ENCODE measurements at regions of chr11 and their contacts with region 1.

Region 1: DNA sequence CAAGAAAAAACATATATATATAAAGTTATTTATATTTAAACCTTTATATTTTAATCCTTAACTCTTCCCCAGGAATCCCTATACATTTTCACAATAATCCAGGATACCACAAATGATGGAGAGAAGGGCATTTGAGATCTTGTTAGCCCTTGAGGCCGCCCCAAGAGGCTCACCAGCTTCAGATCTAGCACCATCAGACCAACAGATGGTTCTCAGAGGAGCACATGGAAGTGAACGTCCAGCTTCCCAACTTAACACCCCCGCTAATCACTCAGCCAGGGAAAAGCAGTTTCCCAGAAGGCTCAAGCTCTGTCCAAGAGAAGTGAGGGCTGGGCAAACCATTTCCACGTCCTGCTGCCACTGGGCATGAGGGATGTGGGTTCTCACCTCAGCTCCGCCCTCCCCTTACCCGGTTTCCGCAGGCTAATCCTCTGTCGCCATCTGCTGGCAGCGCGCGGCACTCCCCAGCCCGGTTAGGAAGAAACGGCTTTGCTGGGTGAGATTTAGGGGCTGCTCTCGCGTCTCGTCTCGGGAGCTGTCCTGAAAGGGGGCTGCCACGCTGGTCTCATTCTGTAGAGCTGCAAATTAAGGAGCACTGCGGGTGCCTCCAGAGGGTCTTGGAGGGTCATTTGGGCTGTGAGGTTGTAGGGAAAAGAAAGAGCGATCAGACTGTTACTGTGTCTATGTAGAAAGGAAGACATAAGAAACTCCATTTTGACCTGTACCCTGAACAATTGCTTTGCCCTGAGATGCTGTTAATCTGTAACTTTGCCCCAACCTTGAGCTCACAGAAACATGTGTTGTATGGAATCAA is 6.8 kb upstream of the FAM111A start:
- DNase-seq: peak; percentile 93
- ATAC-seq: peak; percentile 100
- H3K4me3 Mint-ChIP-seq: no peak overlapping the region
- H3K27ac Mint-ChIP-seq: no peak overlapping the region
- H3K4me1 Mint-ChIP-seq: peaks cover 8% of the 10 kb centered on the region
- H3K27me3 Mint-ChIP-seq: no peaks in the 10 kb centered on the region
- CTCF ChIP-seq: peak; percentile 93

Region 2: DNA sequence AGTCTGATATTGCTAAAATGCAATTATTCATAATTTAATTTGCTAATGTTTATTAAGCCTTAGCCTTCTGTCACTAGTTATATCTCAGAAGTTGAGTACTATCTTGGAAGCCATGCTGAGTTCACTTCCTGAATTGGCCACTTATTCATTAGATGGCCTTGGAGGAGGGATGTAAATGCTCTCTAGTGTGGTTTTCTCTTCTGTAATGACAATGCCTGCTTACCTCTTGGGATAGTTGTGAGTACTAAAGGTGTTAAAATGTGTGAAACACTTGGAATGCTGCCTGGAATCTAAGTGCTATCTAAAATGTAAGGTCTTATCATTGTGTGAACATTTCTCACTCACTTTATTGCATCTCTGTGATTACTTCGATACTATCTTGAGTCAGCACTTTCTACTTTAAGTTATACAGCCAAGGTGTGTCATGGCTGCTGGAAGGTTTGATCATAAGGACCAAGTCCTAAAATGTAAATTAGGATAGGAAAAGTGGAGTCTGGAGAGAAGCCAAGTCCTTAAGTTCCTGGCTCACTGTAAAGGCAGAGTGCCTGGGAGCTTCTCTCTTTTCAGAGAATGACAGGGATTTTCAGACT is 303.7 kb before region 1 on chr11:
- CTCF ChIA-PET with region 1: no interaction called
- POLR2A ChIA-PET with region 1: no interaction called
- intact Hi-C with region 1: no loop called
- DNase-seq: no peak
- ATAC-seq: no peak
- H3K4me3 Mint-ChIP-seq: no peak overlapping the region
- H3K27ac Mint-ChIP-seq: no peak overlapping the region
- H3K4me1 Mint-ChIP-seq: no peaks in the 10 kb centered on the region
- H3K27me3 Mint-ChIP-seq: peaks cover 16% of the 10 kb centered on the region
- CTCF ChIP-seq: no peak

Region 3: GRCh38 chr11:58958500-58958899 is 177.4 kb before region 1 on chr11:
- CTCF ChIA-PET with region 1: interaction called, 12 read pairs
- POLR2A ChIA-PET with region 1: no interaction called
- intact Hi-C with region 1: no loop called
- DNase-seq: peak; percentile 66
- ATAC-seq: peak; percentile 67
- H3K4me3 Mint-ChIP-seq: no peak overlapping the region
- H3K27ac Mint-ChIP-seq: no peak overlapping the region
- H3K4me1 Mint-ChIP-seq: peaks cover 3% of the 10 kb centered on the region
- H3K27me3 Mint-ChIP-seq: peaks cover 8% of the 10 kb centered on the region
- CTCF ChIP-seq: peak; percentile 63

Region 4: DNA sequence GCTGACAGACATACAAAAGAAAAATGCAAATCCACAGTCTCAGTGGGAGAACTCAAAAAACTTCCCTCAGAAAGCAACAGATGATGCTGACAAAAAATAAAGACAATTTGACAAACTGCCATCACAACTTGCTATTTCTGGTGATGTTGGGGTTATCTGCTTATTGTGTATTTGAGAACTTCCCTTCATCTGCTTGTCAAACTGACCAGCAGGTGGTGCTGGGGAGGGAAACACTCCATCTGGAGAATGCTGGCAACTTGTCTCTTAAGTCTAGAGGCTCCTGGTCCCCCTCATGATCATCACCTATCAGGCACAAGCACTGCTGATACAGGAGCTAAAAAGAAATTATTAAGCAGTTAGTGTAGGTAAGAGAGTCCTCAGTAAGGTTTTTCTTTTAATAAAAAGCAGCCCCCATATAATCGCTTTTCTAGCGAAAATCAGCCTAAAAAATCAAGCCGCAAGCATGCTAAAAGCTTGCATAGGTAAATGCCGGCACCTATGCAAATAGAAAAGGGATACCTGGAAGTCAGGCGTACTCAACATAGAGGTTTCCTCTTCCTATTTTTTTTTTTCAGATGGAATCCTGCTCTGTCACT is 38.6 kb before region 1 on chr11:
- CTCF ChIA-PET with region 1: interaction called, 74 read pairs
- POLR2A ChIA-PET with region 1: no interaction called
- intact Hi-C with region 1: loop called (anchors 5 kb)
- DNase-seq: peak; percentile 82
- ATAC-seq: peak; percentile 80
- H3K4me3 Mint-ChIP-seq: no peak overlapping the region
- H3K27ac Mint-ChIP-seq: no peak overlapping the region
- H3K4me1 Mint-ChIP-seq: peaks cover 3% of the 10 kb centered on the region
- H3K27me3 Mint-ChIP-seq: peaks cover 31% of the 10 kb centered on the region
- CTCF ChIP-seq: peak; percentile 76

Region 5: GRCh38 chr11:59119826-59120225 is 16.0 kb before region 1 on chr11:
- CTCF ChIA-PET with region 1: interaction called, 13 read pairs
- POLR2A ChIA-PET with region 1: interaction called, 3 read pairs
- intact Hi-C with region 1: no loop called
- DNase-seq: no peak
- ATAC-seq: no peak
- H3K4me3 Mint-ChIP-seq: no peak overlapping the region
- H3K27ac Mint-ChIP-seq: no peak overlapping the region
- H3K4me1 Mint-ChIP-seq: no peaks in the 10 kb centered on the region
- H3K27me3 Mint-ChIP-seq: no peaks in the 10 kb centered on the region
- CTCF ChIP-seq: no peak

Region 6: GRCh38 chr11:59164028-59164427 is 28.2 kb after region 1 on chr11:
- CTCF ChIA-PET with region 1: interaction called, 143 read pairs
- POLR2A ChIA-PET with region 1: no interaction called
- intact Hi-C with region 1: no loop called
- DNase-seq: no peak
- ATAC-seq: no peak
- H3K4me3 Mint-ChIP-seq: no peak overlapping the region
- H3K27ac Mint-ChIP-seq: no peak overlapping the region
- H3K4me1 Mint-ChIP-seq: peaks cover 2% of the 10 kb centered on the region
- H3K27me3 Mint-ChIP-seq: peaks cover 18% of the 10 kb centered on the region
- CTCF ChIP-seq: no peak

Region 7: DNA sequence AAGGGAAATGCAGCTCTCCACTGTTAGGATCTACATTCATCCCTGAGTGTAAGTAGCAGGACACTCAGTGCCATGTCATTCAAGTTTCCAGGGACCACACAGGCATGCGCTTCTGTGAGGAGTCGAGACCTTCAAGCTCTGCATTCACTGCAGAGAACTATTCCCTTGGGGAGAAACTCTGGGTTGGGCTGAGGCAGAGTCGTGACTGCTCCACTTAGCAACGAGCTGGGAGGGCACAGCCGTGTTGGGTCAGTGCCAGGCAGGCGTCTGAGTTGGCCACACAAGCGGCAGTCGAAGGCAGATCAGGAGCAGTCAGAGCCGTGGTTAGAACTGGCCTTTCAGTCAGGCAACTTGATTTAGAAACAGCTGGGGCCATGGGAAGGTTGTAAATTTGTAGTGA is 62.1 kb after region 1 on chr11:
- CTCF ChIA-PET with region 1: no interaction called
- POLR2A ChIA-PET with region 1: no interaction called
- intact Hi-C with region 1: no loop called
- DNase-seq: no peak
- ATAC-seq: no peak
- H3K4me3 Mint-ChIP-seq: no peak overlapping the region
- H3K27ac Mint-ChIP-seq: no peak overlapping the region
- H3K4me1 Mint-ChIP-seq: peaks cover 16% of the 10 kb centered on the region
- H3K27me3 Mint-ChIP-seq: peaks cover 3% of the 10 kb centered on the region
- CTCF ChIP-seq: no peak

Measured in activated CD8-positive, alpha-beta T cell treated with anti-CD3 and anti-CD28 coated beads for 36 hours (primary cell).